ENCODE measurements at regions of chrX and their contacts with region 1.

Region 1: DNA sequence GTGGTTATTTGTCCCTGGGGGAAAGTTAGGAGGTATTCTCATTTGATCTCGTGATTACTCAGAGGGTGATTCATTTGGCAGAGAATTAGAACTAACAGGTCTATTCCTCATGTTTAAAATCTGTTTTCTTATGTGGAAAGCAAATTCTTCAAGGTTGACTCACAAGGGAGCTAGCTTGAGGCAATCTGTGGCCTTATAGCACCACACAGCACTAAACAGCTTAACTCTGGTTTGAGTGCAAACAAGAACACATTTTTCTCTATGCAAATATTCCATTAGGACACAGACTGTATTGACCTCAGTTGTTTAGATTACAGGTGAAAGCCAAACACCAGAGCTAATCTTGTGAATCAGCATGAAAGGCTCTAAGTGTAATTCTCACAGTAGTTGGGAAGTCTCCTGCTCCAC is 694.4 kb upstream of the POU3F4 start:
- DNase-seq: peak; percentile 98
- H3K4me3 Mint-ChIP-seq: no peak overlapping the region
- H3K27ac Mint-ChIP-seq: peak overlapping the region; percentile 66
- H3K4me1 Mint-ChIP-seq: peaks cover 38% of the 10 kb centered on the region
- H3K27me3 Mint-ChIP-seq: no peaks in the 10 kb centered on the region
- CTCF ChIP-seq: no peak

Region 2: GRCh38 chrX:82676386-82676785 is 137.3 kb before region 1 on chrX:
- CTCF ChIA-PET with region 1: no interaction called
- POLR2A ChIA-PET with region 1: interaction called, 5 read pairs
- intact Hi-C with region 1: loop called (anchors 10 kb)
- DNase-seq: peak; percentile 23
- H3K4me3 Mint-ChIP-seq: no peak overlapping the region
- H3K27ac Mint-ChIP-seq: peak overlapping the region; percentile 29
- H3K4me1 Mint-ChIP-seq: no peaks in the 10 kb centered on the region
- H3K27me3 Mint-ChIP-seq: no peaks in the 10 kb centered on the region
- CTCF ChIP-seq: peak; percentile 35

Region 3: DNA sequence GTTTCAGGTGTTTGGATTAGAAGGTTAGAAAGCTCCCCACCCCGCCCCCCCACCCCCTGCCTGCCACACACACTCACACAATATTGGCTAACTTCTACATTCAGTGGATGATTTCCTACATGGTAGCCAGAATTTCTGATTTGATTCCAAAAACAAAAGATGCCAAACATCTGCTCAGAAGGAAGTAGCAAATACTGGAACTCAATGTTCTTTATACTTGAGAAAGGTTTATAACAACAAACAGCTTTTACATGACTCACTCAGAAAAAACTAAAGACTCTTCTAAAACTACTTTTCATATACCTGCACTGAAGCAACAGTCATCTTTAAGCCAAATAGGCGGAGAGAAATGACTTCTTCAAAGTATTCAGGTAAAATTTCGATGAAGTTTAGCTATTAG is 56.1 kb before region 1 on chrX:
- CTCF ChIA-PET with region 1: interaction called, 4 read pairs
- POLR2A ChIA-PET with region 1: interaction called, 68 read pairs
- intact Hi-C with region 1: loop called (anchors 5 kb)
- DNase-seq: peak; percentile 86
- H3K4me3 Mint-ChIP-seq: peak overlapping the region; percentile 70
- H3K27ac Mint-ChIP-seq: peak overlapping the region; percentile 95
- H3K4me1 Mint-ChIP-seq: peaks cover 27% of the 10 kb centered on the region
- H3K27me3 Mint-ChIP-seq: no peaks in the 10 kb centered on the region
- CTCF ChIP-seq: no peak

Region 4: DNA sequence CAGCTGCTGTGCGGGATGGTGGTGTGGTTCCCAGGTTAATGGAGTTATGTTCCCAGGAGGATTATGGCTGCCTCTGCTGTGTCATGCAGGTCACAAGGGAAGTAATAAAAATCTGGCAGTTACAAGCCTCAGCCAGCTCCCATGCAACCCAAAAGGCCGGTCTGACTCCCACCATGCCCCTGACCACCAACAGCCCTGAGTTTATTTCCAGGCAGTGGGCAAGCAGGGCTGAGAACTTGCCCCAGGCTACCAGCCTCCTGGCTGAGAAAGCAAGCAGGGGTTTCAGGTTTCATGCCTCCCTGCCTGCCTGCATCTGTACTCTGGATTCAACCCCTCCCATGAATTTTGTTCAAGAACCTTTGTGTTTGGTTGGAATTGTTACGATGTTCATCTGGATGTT is 38.2 kb before region 1 on chrX:
- CTCF ChIA-PET with region 1: no interaction called
- POLR2A ChIA-PET with region 1: no interaction called
- intact Hi-C with region 1: no loop called
- DNase-seq: peak; percentile 26
- H3K4me3 Mint-ChIP-seq: no peak overlapping the region
- H3K27ac Mint-ChIP-seq: peak overlapping the region; percentile 12
- H3K4me1 Mint-ChIP-seq: peaks cover 9% of the 10 kb centered on the region
- H3K27me3 Mint-ChIP-seq: no peaks in the 10 kb centered on the region
- CTCF ChIP-seq: no peak

Measured in MCF 10A (cell line).